ENCODE measurements at regions of chr5 and their contacts with region 1.

Region 1: DNA sequence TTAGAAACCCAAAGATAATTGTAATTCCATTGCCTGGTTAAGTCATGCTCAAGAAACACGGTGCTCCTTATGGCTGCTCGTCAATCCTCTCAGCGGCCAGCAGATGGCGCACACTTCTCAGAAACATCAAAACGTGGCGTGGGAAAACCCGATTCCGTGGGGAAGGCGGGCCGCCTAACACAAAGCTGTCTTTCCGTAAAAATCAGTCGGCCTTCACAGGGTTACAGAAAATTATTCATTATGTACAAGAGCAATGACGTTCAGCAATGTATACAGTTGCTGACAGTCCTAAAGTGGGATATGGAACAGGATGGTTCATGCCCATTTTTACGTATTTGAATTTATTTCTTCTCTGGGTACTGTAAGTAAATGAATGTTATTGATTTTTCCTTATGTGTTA is 83.5 kb downstream of the PDE4D start:
- DNase-seq: peak in 1 of 2 experiments; percentile 49
- H3K4me3 ChIP-seq: peak overlapping the region; percentile 55
- H3K27ac ChIP-seq: no peak overlapping the region
- H3K4me1 ChIP-seq: 0 out of 2 replicates have a peak, but pooled peaks cover 4% of the 10 kb centered on the region
- H3K27me3 ChIP-seq: no peaks in the 10 kb centered on the region
- CTCF ChIP-seq: peak; percentile 97

Region 2: DNA sequence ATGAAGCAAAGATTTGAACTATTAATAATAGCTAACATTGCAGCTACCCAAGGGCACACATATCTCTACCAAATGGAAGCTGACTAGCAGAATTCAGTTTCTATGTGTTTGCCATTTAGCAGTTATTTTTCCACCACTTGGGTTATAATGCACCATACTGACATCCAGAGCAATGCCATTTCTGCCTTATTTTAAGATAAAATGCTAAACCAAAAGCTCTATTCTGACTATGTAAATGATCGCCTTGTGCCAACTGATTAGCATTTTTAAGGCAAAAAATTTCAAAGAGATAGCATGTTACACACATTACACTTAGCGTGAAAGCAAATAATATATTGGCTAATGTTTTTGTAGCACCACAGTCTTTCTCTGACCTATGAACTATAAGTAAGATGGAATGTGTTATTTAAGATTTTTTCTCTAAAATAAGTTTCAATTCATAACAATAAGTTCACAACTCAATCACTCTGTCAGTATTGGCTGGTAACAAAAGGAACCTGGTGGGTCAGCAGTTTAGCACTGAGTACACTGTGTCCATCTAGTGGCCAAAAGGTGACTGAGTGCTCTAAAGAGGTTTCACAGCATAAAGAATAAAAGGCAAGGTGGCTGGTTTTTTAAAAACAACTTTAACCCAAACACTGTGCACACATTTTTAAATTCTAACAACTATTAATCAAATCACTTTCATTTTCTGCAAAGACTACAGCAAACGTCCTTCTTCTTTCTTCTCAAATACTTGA is 360.0 kb before region 1 on chr5:
- CTCF ChIA-PET with region 1: no interaction called
- POLR2A ChIA-PET with region 1: no interaction called
- intact Hi-C with region 1: no loop called
- DNase-seq: no peak
- H3K4me3 ChIP-seq: no peak overlapping the region
- H3K27ac ChIP-seq: no peak overlapping the region
- H3K4me1 ChIP-seq: no peaks in the 10 kb centered on the region
- H3K27me3 ChIP-seq: no peaks in the 10 kb centered on the region
- CTCF ChIP-seq: peak; percentile 40

Region 3: GRCh38 chr5:59460368-59461153 is 349.5 kb before region 1 on chr5:
- CTCF ChIA-PET with region 1: no interaction called
- POLR2A ChIA-PET with region 1: no interaction called
- intact Hi-C with region 1: no loop called
- DNase-seq: no peak
- H3K4me3 ChIP-seq: no peak overlapping the region
- H3K27ac ChIP-seq: no peak overlapping the region
- H3K4me1 ChIP-seq: no peaks in the 10 kb centered on the region
- H3K27me3 ChIP-seq: no peaks in the 10 kb centered on the region
- CTCF ChIP-seq: no peak

Region 4: DNA sequence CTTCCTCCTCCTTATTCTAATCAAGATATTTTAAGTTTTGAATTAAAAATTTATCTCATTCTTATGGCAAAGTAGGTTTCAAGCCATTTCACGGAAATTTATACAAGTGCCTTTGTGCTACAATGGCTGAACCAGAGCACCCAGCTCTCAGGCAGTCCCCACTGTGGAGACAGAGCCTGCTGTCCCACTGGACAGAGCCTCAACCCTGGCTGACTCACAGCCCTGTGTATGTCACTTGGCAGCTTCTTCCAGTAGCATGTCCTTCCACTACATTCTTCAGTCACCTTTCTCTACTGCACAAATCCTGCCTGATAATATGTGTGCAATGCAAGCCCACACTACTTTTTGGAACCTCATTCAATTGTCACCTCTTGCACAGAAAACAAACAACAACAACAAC is 169.6 kb before region 1 on chr5:
- CTCF ChIA-PET with region 1: no interaction called
- POLR2A ChIA-PET with region 1: no interaction called
- intact Hi-C with region 1: no loop called
- DNase-seq: peak; percentile 11 to 40
- H3K4me3 ChIP-seq: no peak overlapping the region
- H3K27ac ChIP-seq: no peak overlapping the region
- H3K4me1 ChIP-seq: peaks cover 4% of the 10 kb centered on the region; the same call in 1 of the 2 replicates
- H3K27me3 ChIP-seq: no peaks in the 10 kb centered on the region
- CTCF ChIP-seq: no peak

Region 5: DNA sequence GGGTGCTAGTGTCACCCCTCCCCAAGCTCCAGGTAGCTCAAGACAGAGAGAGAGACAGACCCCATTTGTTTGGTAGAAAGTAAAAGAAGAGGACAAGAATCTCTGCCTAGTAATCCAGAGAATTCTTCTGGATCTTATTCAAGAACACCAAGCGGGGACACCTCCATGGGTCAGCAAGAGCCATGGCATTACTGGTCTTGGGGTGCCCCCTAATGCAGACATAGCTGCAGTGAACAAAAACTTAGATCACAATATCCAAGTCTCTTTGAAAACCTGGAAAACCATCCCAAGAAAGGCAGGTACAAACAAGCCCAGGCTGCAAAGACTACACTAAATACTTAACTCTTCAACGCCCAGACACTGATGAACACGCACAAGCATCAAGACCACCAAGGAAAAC is 113.4 kb after region 1 on chr5:
- CTCF ChIA-PET with region 1: interaction called, 5 read pairs
- POLR2A ChIA-PET with region 1: no interaction called
- intact Hi-C with region 1: loop called (anchors 1 kb)
- DNase-seq: peak in 1 of 2 experiments; percentile 2
- H3K4me3 ChIP-seq: no peak overlapping the region
- H3K27ac ChIP-seq: no peak overlapping the region
- H3K4me1 ChIP-seq: no peaks in the 10 kb centered on the region
- H3K27me3 ChIP-seq: no peaks in the 10 kb centered on the region
- CTCF ChIP-seq: 0 out of 2 replicates have a peak, but pooled peaks have one; percentile 18

Region 6: DNA sequence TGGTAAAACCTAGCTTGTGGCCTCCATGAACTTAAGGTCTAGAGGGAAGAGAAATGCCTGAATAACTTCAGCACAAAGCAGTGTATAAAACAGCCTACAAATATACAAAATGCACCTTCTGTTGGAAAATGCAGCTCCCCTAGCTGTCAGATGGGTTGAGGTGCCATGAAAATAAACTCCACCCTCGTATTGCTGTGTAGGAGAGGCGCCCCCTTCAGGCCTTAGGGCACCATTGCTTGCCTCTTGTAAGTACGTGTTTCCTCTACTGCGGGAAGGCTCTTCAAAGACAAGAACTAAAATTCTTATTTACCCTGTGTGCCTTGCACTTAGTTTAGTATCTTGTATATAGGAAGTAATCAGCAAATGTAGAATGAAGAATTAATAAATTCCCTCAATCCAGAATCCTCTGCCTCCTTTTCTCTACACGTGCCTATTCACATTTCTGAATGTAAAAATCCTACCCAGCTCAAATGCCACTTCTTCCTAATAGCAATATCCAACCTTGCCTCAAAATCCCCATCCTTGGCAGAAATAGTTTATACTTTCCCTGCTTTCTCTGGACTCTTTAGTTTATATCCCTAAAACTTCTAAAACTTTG is 477.2 kb after region 1 on chr5:
- CTCF ChIA-PET with region 1: interaction called, 4 read pairs
- POLR2A ChIA-PET with region 1: no interaction called
- intact Hi-C with region 1: loop called (anchors 1 kb)
- DNase-seq: peak in 1 of 2 experiments; percentile 29
- H3K4me3 ChIP-seq: no peak overlapping the region
- H3K27ac ChIP-seq: no peak overlapping the region
- H3K4me1 ChIP-seq: no peaks in the 10 kb centered on the region
- H3K27me3 ChIP-seq: no peaks in the 10 kb centered on the region
- CTCF ChIP-seq: peak; percentile 59

Region 7: DNA sequence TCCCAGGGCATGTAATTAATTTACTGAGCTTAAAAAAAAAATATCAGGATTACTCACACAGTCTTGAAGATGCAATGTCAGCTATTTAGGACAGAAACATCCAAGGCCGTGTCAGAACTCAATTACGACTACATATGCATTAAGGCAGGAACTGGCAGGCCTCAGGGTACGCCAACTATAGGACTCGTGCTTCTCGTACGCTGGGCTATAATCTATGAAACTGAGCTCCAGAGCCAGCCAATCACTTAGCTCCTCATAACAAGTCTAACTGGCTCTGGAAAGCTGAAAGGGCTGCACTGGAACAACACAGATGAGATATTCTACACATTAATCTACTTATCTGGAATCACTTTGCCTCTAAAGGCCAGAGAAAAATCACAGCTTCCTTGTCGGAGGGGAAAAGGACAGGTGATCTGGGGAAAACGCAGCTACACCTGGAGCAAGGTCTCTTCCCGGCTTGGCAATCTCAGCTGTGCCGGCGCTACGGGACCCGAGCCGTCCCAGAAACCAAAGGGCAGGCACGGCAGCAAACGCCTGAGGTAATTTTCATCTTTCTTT is 677.9 kb after region 1 on chr5:
- CTCF ChIA-PET with region 1: interaction called, 3 read pairs
- POLR2A ChIA-PET with region 1: interaction called, 10 read pairs
- intact Hi-C with region 1: no loop called
- DNase-seq: peak; percentile 53 to 63
- H3K4me3 ChIP-seq: peak overlapping the region; percentile 67
- H3K27ac ChIP-seq: peak overlapping the region; percentile 75
- H3K4me1 ChIP-seq: peaks cover 20% of the 10 kb centered on the region
- H3K27me3 ChIP-seq: no peaks in the 10 kb centered on the region
- CTCF ChIP-seq: no peak

Region 8: DNA sequence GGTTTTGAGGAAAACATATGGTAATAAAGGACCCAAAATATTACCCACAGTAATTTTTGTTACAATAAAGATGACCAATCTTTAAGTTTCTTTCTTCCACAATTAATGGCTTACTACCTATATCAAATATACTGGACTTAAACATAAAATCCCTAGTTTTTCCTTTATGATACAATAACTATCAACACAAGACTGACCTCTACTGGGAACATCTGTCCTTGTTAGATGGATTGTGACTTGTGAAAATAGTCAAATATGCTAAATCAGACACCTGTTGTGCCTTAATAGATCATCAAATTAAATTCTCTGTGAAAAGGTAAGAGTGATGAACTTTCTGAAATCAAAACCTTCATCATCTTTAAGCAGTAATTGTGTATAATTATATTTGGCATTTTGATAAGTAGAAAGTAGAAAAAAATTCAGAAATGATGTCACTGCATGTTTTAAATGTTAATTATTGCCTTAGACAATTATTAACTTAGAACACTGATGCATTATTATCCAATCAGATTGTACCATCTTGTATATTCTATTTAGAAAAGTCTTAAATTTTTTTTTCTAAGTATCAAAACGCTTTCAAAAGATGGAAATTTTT is 776.4 kb after region 1 on chr5:
- CTCF ChIA-PET with region 1: no interaction called
- POLR2A ChIA-PET with region 1: no interaction called
- intact Hi-C with region 1: loop called (anchors 1 kb)
- DNase-seq: no peak
- H3K4me3 ChIP-seq: no peak overlapping the region
- H3K27ac ChIP-seq: no peak overlapping the region
- H3K4me1 ChIP-seq: no peaks in the 10 kb centered on the region
- H3K27me3 ChIP-seq: no peaks in the 10 kb centered on the region
- CTCF ChIP-seq: peak; percentile 49; the same call in 1 of the 2 replicates

Region 9: DNA sequence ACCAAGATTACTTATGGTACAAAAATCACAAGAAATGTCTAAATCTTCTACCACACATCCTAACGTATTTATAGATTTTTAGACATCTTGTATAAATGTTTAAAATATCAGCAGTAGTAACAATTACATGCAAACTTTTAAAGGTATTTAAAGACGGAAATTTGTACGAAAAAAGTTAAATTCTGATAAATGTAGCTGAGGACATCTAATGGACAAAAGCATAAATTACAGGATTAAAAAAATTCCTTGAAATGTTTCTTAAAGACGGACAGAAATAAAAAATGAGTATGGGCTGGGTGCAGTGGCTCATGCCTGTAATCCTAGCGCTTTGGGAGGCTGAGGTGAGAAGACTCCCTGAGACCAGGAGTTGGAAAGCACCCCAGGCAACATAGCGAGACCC is 1119.0 kb after region 1 on chr5:
- CTCF ChIA-PET with region 1: no interaction called
- POLR2A ChIA-PET with region 1: no interaction called
- intact Hi-C with region 1: loop called (anchors 5 kb)
- DNase-seq: no peak
- H3K4me3 ChIP-seq: no peak overlapping the region
- H3K27ac ChIP-seq: no peak overlapping the region
- H3K4me1 ChIP-seq: no peaks in the 10 kb centered on the region
- H3K27me3 ChIP-seq: no peaks in the 10 kb centered on the region
- CTCF ChIP-seq: peak; percentile 65